ENCODE measurements at regions of chr6 and their contacts with region 1.

Region 1: GRCh38 chr6:52946306-52946705 is 36.8 kb upstream of the GSTA3 start:
- DNase-seq: no peak
- ATAC-seq: no peak
- H3K4me3 ChIP-seq: no peak overlapping the region
- H3K27ac ChIP-seq: no peak overlapping the region
- H3K4me1 ChIP-seq: no peaks in the 10 kb centered on the region
- H3K27me3 ChIP-seq: peaks cover 4% of the 10 kb centered on the region; the same call in 1 of the 2 replicates
- CTCF ChIP-seq: no peak

Region 2: DNA sequence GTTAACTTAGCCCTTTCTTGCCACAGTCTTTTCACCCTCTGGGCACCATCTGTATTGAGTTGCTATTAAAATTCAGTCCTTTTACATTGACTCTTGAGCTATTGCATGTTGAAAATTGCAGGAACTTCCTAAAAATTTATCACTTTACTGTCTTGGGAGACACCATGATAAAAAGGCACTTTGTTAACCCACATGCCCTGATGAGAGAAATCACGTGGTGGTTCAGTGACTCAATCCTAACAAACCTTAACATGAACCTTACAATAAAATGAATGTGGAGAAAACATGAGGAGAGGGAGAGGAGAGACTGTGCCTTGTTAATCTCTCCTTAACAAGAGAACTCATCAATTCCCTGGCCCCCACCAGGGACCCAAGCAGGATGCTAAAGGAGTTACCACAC is 18.0 kb after region 1 on chr6:
- CTCF ChIA-PET with region 1: no interaction called
- POLR2A ChIA-PET with region 1: interaction called, 10 read pairs
- in situ Hi-C with region 1: no loop called
- intact Hi-C with region 1: no loop called
- DNase-seq: no peak
- ATAC-seq: no peak
- H3K4me3 ChIP-seq: no peak overlapping the region
- H3K27ac ChIP-seq: no peak overlapping the region
- H3K4me1 ChIP-seq: no peaks in the 10 kb centered on the region
- H3K27me3 ChIP-seq: no peaks in the 10 kb centered on the region
- CTCF ChIP-seq: no peak